Endothelial cell of umbilical vein (primary cell): ENCODE measurements at regions of chr1 and their contacts with region 1.

Region 1: DNA sequence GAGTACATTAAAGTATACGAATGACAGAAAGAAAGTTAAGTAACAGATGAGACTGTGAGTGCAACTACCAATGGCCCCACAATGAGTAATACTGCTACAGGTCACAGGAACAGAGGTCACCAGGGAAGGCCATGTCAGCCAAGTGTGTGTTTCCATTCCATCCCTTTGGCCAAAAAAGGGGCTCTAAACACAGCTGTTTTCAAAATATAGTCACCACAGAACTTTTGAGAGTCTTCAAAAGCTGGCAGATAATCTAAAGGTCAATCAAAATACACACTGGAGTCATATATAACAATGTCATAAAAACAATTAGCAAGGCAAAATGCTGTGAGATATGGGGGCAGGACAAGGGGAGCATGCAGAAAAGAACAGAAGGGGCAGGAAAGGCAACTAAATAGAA is 10.2 kb downstream of the USP24 start:
- DNase-seq: peak; percentile 42
- H3K4me3 ChIP-seq: no peak overlapping the region
- H3K27ac ChIP-seq: no peak overlapping the region
- H3K4me1 ChIP-seq: peaks cover 18% of the 10 kb centered on the region
- H3K27me3 ChIP-seq: no peaks in the 10 kb centered on the region
- CTCF ChIP-seq: no peak
- POLR2A ChIP-seq: no peak

Region 2: DNA sequence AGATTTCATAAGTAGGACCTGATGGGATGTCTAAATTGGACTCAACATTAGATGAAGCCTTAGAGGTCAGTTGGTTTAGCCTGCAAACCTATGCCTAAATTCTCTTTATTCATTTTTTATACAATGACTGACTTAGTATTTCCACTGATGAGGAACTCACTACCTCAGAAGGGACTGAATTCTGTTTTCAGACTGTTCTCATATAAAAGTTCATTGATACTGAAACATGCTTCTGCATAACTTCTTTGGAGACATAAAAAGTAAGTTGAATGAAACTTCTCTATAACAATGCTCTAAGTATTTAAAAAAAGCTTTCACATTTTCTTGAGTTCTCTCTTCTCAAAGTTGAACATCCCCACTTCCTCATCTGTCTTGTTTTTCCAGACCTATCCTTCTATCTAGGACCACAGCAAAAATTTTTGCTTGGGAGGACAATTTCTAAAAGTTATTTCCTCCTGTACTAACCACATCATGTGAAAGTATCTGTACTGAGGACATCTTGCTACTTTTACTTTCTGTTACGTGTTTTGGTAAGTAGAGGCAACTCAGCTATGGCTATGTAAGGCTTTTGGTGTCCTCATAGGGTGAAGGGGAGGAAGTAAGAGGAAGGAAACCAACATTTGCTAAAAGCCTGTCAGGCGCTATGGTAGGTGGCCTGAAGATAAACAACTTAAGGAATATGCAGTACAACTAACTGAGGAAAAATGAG is 54.0 kb before region 1 on chr1:
- CTCF ChIA-PET with region 1: no interaction called
- POLR2A ChIA-PET with region 1: no interaction called
- dilution Hi-C with region 1: no loop called
- intact Hi-C with region 1: no loop called
- DNase-seq: no peak
- H3K4me3 ChIP-seq: no peak overlapping the region
- H3K27ac ChIP-seq: no peak overlapping the region
- H3K4me1 ChIP-seq: no peaks in the 10 kb centered on the region
- H3K27me3 ChIP-seq: no peaks in the 10 kb centered on the region
- CTCF ChIP-seq: no peak
- POLR2A ChIP-seq: no peak

Region 3: DNA sequence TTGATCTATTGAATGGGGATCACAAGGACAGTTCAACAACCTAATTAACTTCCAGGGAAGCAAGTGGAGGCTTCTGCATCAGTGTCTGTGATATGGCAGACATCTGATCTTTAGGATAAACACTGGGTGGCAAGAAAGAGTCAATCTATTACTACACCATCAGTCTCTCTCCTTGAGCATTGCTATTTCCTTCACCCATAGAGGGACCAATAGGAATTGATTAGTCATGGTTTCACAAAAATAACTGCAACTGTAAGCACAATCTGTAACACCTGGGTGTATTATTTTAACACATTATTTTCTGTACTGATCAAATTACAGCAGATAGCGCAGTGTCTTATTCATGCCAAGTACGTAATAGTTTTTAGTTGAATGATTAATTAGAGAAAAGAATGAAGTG is 40.1 kb before region 1 on chr1:
- CTCF ChIA-PET with region 1: interaction called, 3 read pairs
- POLR2A ChIA-PET with region 1: no interaction called
- dilution Hi-C with region 1: no loop called
- intact Hi-C with region 1: loop called (anchors 2 kb)
- DNase-seq: no peak
- H3K4me3 ChIP-seq: no peak overlapping the region
- H3K27ac ChIP-seq: no peak overlapping the region
- H3K4me1 ChIP-seq: no peaks in the 10 kb centered on the region
- H3K27me3 ChIP-seq: no peaks in the 10 kb centered on the region
- CTCF ChIP-seq: no peak
- POLR2A ChIP-seq: no peak

Region 4: GRCh38 chr1:55215256-55216021 is 10.4 kb after region 1 on chr1 and contains the start of gene USP24:
- CTCF ChIA-PET with region 1: interaction called, 6 read pairs
- POLR2A ChIA-PET with region 1: interaction called, 6 read pairs
- dilution Hi-C with region 1: no loop called
- intact Hi-C with region 1: loop called (anchors 1 kb)
- DNase-seq: peak; percentile 69
- H3K4me3 ChIP-seq: peak within 1 kb of the TSS; percentile 46 to 79 (median 49)
- H3K27ac ChIP-seq: peak within 1 kb of the TSS; percentile 34
- H3K4me1 ChIP-seq: peaks cover 17% of the 10 kb centered on the region
- H3K27me3 ChIP-seq: no peaks in the 10 kb centered on the region
- CTCF ChIP-seq: no peak
- POLR2A ChIP-seq: peak; percentile 72
- total RNA-seq, gene USP24: 30.0 and 32.6 TPM in 2 replicates